ENCODE measurements at regions of chr4 and their contacts with region 1.

Region 1: DNA sequence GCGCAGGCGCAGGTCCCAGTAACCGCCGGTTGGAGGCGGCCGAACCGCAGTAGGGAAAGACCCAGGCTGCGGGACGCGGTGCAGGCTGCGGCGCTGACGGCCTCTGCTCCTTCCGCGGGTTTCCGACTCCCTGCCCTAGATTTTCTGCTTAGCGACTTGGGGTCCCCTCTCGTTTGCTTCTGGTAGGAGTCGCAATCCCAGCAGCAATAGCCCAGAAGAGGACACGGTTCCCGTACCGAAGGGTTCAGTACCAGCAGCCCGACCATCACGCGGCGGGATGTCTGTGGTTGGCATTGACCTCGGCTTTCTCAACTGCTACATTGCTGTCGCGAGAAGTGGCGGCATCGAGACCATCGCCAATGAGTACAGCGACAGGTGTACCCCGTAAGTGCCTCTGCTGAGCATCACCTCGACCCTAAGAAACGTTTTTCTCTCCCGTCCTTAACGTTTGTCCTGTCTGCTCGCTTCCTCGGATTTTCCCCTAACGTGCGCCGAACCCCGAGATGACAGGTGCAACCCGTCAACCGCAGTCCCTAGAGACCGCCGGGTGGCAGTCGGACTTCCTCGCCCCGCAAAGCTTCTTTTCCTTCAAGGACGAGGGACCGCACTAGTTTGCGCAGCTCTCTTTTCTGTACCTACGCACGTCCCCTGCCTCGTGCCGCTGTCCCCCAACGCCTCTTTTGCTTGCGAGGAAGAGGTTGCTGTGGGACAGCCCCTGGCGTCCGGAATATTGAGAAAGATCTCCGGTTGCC is at the start of gene HSPA4L:
- DNase-seq: peak; percentile 45
- ATAC-seq: peak; percentile 50
- H3K4me3 ChIP-seq: peak within 1 kb of the TSS; percentile 79
- H3K27ac ChIP-seq: peak within 1 kb of the TSS; percentile 48
- H3K4me1 ChIP-seq: no peaks in the 10 kb centered on the region
- H3K27me3 ChIP-seq: no peaks in the 10 kb centered on the region; the same call in 1 of the 2 replicates
- CTCF ChIP-seq: peak; percentile 47
- POLR2A ChIP-seq: peak; percentile 54
- RAD21 ChIP-seq: peak; percentile 43
- total RNA-seq, gene HSPA4L: 2.3 and 3.9 TPM in 2 replicates

Region 2: DNA sequence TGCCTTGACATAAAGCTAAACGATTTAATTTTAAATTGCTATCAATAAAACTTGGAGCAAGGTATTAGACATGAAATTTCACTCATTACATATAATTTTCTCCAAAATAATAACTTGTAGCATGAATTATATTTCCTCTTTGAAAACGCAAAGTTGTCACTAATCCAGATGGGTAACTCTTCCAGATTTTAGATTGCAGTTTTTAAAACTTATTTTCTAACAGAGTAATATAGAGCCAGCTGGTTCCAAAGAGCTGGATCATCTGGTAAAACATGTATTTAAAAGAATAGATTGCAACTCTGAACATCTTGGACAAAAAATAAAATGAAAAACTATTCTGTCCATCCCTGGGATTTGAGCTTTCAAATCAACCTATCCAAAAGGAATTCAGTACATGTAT is 387.9 kb before region 1 on chr4:
- CTCF ChIA-PET with region 1: no interaction called
- POLR2A ChIA-PET with region 1: no interaction called
- dilution Hi-C with region 1: no loop called
- in situ Hi-C with region 1: no loop called
- intact Hi-C with region 1: no loop called
- DNase-seq: no peak
- ATAC-seq: no peak
- H3K4me3 ChIP-seq: no peak overlapping the region
- H3K27ac ChIP-seq: no peak overlapping the region
- H3K4me1 ChIP-seq: no peaks in the 10 kb centered on the region
- H3K27me3 ChIP-seq: no peaks in the 10 kb centered on the region
- CTCF ChIP-seq: no peak
- POLR2A ChIP-seq: no peak
- RAD21 ChIP-seq: no peak

Region 3: GRCh38 chr4:127880764-127881562 is 98.5 kb after region 1 on chr4 and contains the start of gene PLK4:
- CTCF ChIA-PET with region 1: no interaction called
- POLR2A ChIA-PET with region 1: no interaction called
- dilution Hi-C with region 1: no loop called
- in situ Hi-C with region 1: no loop called
- intact Hi-C with region 1: loop called (anchors 5 kb)
- DNase-seq: peak; percentile 93
- ATAC-seq: peak; percentile 92
- H3K4me3 ChIP-seq: peak within 1 kb of the TSS; percentile 77
- H3K27ac ChIP-seq: peak within 1 kb of the TSS; percentile 65
- H3K4me1 ChIP-seq: no peaks in the 10 kb centered on the region
- H3K27me3 ChIP-seq: no peaks in the 10 kb centered on the region
- CTCF ChIP-seq: no peak
- POLR2A ChIP-seq: peak; percentile 34; the same call in 1 of the 2 replicates
- RAD21 ChIP-seq: no peak
- total RNA-seq, gene PLK4: 15.1 and 16.1 TPM in 2 replicates

Region 4: DNA sequence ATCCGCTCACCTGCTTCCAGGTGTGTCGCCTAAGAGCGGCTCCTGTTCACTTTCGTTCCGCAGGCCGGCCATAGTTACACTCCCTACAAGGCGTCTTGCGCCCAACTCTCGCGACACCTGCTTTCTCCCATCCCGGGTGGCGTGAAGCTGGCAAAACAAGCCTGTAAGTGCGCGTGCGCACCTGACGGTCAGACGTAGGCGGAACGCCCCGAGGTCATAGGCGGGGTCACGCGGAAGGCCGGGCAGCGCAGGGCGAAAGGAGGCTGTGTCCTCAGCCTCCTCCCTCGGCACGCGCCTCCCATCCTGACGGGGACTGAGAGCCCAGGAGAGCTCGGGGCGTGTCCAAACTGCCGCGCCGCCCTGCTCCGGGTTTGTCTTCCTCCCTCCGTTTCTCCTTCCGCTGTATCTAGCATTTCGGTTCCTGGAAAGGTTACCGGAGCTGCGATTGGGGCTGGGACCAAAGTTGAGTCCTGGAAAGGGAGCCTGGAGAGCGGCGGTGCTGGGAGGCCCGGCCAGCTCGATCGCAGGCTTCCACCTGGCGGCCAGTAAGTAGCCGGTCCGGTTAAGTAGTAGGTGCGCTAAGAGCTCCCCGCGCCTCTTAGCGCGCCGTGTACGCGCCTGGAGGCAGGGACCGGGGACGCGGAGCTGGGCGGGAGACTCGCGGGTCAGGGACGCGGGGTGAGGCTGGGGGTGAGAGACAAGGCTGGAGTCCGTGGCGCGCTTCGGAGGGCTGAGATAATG is 182.8 kb after region 1 on chr4 and contains the starts of genes ABHD18 and MFSD8:
- CTCF ChIA-PET with region 1: no interaction called
- POLR2A ChIA-PET with region 1: no interaction called
- dilution Hi-C with region 1: no loop called
- in situ Hi-C with region 1: no loop called
- intact Hi-C with region 1: loop called (anchors 10 kb)
- DNase-seq: peak; percentile 99
- ATAC-seq: peak; percentile 97
- H3K4me3 ChIP-seq: peak within 1 kb of the TSS; percentile 69
- H3K27ac ChIP-seq: peak within 1 kb of the TSS; percentile 63
- H3K4me1 ChIP-seq: no peaks in the 10 kb centered on the region
- H3K27me3 ChIP-seq: no peaks in the 10 kb centered on the region
- CTCF ChIP-seq: peak; percentile 45
- POLR2A ChIP-seq: peak; percentile 71
- RAD21 ChIP-seq: peak; percentile 42
- total RNA-seq, gene ABHD18: 4.3 and 4.7 TPM in 2 replicates
- total RNA-seq, gene MFSD8: 31.4 and 36.7 TPM in 2 replicates

Region 5: GRCh38 chr4:128060699-128061565 is 278.5 kb after region 1 on chr4 and contains the start of gene LARP1B:
- CTCF ChIA-PET with region 1: no interaction called
- POLR2A ChIA-PET with region 1: interaction called, 21 read pairs
- dilution Hi-C with region 1: no loop called
- in situ Hi-C with region 1: no loop called
- intact Hi-C with region 1: loop called (anchors 2 kb)
- DNase-seq: peak; percentile 95
- ATAC-seq: peak; percentile 96
- H3K4me3 ChIP-seq: peak within 1 kb of the TSS; percentile 77
- H3K27ac ChIP-seq: peak within 1 kb of the TSS; percentile 85
- H3K4me1 ChIP-seq: no peaks in the 10 kb centered on the region
- H3K27me3 ChIP-seq: no peaks in the 10 kb centered on the region
- CTCF ChIP-seq: no peak
- POLR2A ChIP-seq: peak; percentile 90
- RAD21 ChIP-seq: no peak
- total RNA-seq, gene LARP1B: 11.1 and 21.9 TPM in 2 replicates

Measured in IMR-90 (cell line).